BJ (cell line): ENCODE measurements at regions of chr2 and their contacts with region 1.

Region 1: DNA sequence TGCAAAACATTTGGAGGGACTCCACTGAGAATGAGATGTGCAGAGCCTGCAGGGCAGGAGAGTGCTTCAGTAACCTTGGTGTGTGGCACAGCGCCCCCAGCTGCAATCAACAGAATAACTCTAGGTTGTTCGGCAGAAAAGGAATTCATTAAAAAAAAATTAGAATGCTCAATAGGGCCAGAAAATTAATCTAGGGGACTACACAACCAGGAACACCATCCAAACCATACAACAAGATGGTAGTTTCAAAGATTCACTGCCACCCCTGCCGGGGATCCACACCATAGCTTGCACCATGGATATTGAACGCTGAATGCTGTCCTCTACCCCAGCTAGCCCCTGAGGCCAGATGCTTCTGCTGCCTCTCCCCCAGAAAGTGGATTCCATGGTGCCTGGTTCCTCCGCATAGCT is 50.1 kb downstream of the THUMPD2 start:
- DNase-seq: no peak
- H3K4me3 ChIP-seq: no peak overlapping the region
- H3K27me3 ChIP-seq: no peaks in the 10 kb centered on the region
- CTCF ChIP-seq: peak; percentile 71

Region 2: DNA sequence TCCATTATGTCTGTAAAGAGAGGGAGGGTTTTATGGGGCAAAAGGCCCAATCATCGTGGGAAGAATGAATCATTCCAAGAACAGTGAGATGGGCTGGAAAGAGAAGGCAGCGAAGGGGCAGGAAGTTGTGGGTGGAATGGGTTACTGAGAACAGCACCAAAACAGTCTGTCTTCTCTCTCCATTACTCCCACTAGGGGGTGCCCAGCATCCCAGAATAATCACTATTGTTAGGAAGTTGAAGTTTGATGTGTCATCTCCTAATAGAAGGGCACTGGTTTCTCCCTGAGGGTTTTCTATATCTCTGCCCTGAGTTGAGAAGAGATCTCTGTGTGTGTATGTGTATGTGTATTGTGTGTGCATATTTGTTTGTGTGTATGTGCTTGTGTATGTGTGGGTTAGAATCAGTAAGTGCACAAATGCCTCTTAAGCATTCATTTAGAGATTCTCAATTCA is 215.3 kb before region 1 on chr2:
- CTCF ChIA-PET with region 1: interaction called, 12 read pairs
- POLR2A ChIA-PET with region 1: no interaction called
- DNase-seq: peak; percentile 90
- H3K4me3 ChIP-seq: no peak overlapping the region
- H3K27me3 ChIP-seq: no peaks in the 10 kb centered on the region
- CTCF ChIP-seq: peak; percentile 78

Region 3: DNA sequence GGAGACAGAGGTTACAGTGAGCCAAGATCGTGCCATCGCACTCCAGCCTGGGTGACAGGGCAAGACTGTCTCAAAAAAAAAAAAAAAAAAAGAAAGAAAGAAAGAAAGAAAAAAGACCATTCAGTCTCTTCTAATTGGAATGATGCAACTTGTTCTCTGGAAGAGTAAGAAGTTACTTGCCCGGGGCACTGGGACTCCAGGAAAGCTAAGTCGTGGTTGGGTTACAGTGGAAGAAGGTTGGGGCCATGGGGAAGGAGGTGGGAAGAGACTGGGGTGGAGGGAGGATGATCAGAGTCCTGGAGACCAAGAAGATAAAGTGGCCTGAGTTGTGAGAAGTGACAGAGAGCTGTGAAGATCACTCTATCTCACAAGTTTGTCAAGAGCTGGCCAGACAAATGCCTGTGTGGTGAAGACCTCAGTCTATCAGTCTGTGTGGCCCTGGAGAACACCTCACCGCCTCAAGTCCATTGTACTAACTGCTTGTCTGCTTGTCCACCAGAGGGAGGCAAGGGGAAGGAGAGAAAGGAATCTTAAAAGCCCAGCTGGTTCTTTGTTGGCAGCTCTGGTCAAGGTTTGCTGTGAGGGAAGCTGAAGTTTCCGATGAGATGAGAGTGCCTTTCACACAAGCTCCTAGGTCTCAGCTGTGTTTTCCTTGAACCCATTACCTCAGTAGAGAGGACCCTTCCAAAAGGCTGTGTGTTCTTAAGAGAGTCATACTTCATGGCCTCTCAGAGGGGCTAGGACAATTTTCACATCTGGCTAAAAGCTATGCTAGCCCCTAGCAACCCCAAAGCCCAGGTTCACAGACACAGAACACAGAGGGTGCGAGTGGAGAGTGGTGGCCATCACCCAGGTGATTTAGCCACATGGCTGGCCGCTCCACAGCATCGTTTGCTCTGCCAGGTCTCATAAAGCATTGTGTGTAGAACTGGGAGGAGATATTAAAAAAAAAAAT is 135.2 kb before region 1 on chr2:
- CTCF ChIA-PET with region 1: interaction called, 29 read pairs
- POLR2A ChIA-PET with region 1: no interaction called
- DNase-seq: peak; percentile 28
- H3K4me3 ChIP-seq: no peak overlapping the region
- H3K27me3 ChIP-seq: no peaks in the 10 kb centered on the region
- CTCF ChIP-seq: peak; percentile 83

Region 4: DNA sequence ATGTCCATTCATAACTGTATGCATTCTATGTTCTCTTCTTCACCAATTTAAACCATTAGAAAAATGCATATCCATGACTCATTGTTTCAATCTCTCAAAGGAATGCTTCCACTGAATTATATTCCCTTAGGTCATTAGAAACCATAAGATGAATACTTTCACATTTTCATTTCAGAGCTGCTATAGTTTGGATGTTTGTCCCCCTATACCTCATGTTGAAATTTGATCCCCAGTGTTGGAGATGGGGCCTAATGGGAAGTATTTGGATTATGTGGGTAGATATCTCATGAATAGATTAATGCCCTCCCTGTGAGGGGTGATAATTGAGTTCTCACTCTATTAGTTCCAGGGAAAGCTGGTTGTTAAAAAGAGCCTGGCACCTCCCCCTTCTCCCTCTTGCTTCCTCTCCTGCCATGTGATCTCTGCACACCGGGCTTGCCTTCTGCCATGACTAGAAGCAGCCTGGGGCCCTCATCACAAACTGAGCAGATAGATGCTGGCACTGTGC is 14.4 kb after region 1 on chr2:
- CTCF ChIA-PET with region 1: interaction called, 29 read pairs
- POLR2A ChIA-PET with region 1: no interaction called
- DNase-seq: no peak
- H3K4me3 ChIP-seq: no peak overlapping the region
- H3K27me3 ChIP-seq: no peaks in the 10 kb centered on the region
- CTCF ChIP-seq: no peak